Caco-2 (cell line): ENCODE measurements at regions of chr15 and their contacts with region 1.

Region 1: GRCh38 chr15:49421991-49422390 is 1.1 kb upstream of the FGF7 start:
- DNase-seq: peak in 1 of 2 experiments; percentile 45
- H3K4me3 ChIP-seq: no peak overlapping the region
- H3K4me3 Mint-ChIP-seq: peak overlapping the region; percentile 52
- H3K27ac Mint-ChIP-seq: no peak overlapping the region
- H3K4me1 ChIP-seq: no peaks in the 10 kb centered on the region
- H3K4me1 Mint-ChIP-seq: peaks cover 7% of the 10 kb centered on the region
- H3K27me3 ChIP-seq: no peaks in the 10 kb centered on the region
- H3K27me3 Mint-ChIP-seq: peaks cover 6% of the 10 kb centered on the region
- CTCF ChIP-seq: peak; percentile 60 to 65

Region 2: DNA sequence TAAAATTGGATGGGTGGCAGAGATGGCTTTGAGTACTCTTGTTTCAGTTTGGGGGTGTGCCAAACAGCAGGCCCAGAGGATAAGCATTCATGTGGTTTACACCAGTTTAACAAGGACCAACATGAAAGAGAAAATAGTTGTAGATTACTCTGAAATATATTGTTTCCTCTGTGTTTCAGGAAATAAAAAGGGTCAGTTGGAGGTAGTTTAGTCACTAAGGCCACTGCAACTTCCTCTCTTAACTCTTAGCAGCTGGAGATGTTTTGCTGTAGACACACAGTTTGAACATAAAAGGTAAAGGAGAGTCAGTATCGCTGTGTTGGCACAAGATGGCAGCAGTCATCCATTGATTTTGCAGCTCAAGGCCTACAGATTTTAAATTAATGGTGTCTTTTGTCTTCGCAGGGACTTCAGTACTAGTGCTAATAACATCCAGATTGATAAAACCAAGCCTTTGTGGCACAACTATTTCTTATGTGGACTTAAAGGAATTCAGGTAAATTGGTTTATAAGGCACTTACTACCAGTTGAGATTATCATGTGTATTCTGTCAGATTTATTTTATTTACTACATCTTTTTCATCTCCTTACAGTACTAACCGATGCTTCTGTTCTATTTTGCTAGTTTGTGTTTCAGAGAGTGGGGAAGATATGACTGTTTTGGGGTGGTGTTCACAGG is 186.4 kb before region 1 on chr15:
- CTCF ChIA-PET with region 1: interaction called, 20 read pairs
- POLR2A ChIA-PET with region 1: no interaction called
- intact Hi-C with region 1: loop called (anchors 1 kb)
- DNase-seq: peak in 1 of 2 experiments; percentile 54
- H3K4me3 ChIP-seq: no peak overlapping the region
- H3K4me3 Mint-ChIP-seq: no peak overlapping the region
- H3K27ac Mint-ChIP-seq: no peak overlapping the region
- H3K4me1 ChIP-seq: peaks cover 8% of the 10 kb centered on the region
- H3K4me1 Mint-ChIP-seq: peaks cover 7% of the 10 kb centered on the region
- H3K27me3 ChIP-seq: no peaks in the 10 kb centered on the region
- H3K27me3 Mint-ChIP-seq: no peaks in the 10 kb centered on the region
- CTCF ChIP-seq: peak; percentile 49 to 56